Heart left ventricle (tissue), 16 donors: ENCODE measurements at regions of chr9 and their contacts with region 1.

Region 1: DNA sequence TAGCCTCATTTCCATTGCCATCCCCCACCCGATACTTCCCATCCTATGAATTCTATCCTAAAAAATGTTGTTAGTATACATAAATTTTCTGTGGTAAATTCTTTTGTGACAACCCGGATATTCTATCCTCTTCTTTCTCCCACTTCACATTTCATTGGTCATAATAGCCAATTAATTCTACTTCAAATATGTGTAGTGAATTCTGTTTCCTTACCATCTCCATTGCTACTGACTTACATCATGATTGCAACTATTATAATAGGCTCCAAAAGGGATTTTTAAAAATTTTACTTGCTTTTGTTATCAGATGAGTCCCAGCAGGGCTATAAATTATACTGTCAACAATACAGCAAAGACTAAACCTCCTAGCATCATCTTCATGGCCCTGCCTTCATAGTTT is 1326.8 kb downstream of the PTPRD start:
- DNase-seq: no peak
- ATAC-seq: no peak
- H3K4me3 ChIP-seq: no peak overlapping the region
- H3K27ac ChIP-seq: no peak overlapping the region
- H3K4me1 ChIP-seq: no peaks in the 10 kb centered on the region
- H3K27me3 ChIP-seq: no peaks in the 10 kb centered on the region
- CTCF ChIP-seq: no peak
- POLR2A ChIP-seq: no peak

Region 2: DNA sequence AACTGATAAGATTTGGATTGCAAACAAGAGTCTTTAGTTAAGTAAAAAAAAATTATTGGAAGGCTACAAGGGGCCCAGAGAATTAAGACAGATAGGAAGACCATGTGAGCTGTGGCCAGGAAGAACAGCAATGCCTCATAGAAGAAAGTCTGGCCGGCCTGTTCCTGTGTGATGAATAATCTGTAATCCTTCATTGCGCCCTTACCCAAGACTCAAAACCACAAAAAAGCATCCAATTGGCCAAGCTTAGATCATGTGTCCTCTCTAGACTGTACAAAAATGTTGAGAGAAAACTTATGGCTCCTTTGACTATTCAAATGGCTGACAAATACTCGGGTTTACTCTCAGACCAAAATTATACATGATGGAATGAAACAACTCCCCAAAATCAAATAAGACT is 56.7 kb before region 1 on chr9:
- intact Hi-C with region 1: loop called in 1 of 10 experiments (anchors 10 kb)
- DNase-seq: no peak
- ATAC-seq: peak in 1 of 4 donors; percentile 54
- H3K4me3 ChIP-seq: no peak overlapping the region
- H3K27ac ChIP-seq: no peak overlapping the region
- H3K4me1 ChIP-seq: no peaks in the 10 kb centered on the region
- H3K27me3 ChIP-seq: no peaks in the 10 kb centered on the region
- CTCF ChIP-seq: no peak
- POLR2A ChIP-seq: no peak

Region 3: GRCh38 chr9:9799287-9799686 is 513.3 kb after region 1 on chr9:
- intact Hi-C with region 1: no loop called
- DNase-seq: no peak
- ATAC-seq: no peak
- H3K4me3 ChIP-seq: no peak overlapping the region
- H3K27ac ChIP-seq: no peak overlapping the region
- H3K4me1 ChIP-seq: no peaks in the 10 kb centered on the region
- H3K27me3 ChIP-seq: no peaks in the 10 kb centered on the region
- CTCF ChIP-seq: no peak
- POLR2A ChIP-seq: no peak